Tibial artery (tissue), 4 donors: ENCODE measurements at regions of chr3 and their contacts with region 1.

Region 1: DNA sequence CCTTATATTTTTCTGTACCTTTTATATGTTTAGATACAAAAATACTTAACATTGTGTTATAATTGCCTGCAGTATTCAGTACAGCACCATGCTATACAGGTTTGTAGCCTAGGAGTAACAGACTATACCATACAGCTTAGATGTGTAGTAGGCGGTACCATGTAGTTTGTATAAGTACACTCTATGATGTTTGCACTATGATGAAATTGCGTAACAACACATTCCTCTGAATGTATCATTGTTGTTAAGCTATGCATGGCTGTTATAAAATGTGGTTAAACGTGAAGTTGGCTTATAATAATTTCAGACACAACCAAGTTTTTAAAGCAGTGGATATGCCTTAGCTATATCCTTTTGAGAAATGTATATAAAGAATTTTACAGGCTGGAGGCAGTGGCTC is 328.3 kb downstream of the PLCL2 start:
- DNase-seq: no peak
- H3K4me3 ChIP-seq: no peak overlapping the region
- H3K27ac ChIP-seq: no peak overlapping the region
- H3K4me1 ChIP-seq: peaks cover 0 to 12% (median 4%) of the 10 kb centered on the region in 4 donors
- H3K27me3 ChIP-seq: no peaks in the 10 kb centered on the region
- CTCF ChIP-seq: no peak

Region 2: DNA sequence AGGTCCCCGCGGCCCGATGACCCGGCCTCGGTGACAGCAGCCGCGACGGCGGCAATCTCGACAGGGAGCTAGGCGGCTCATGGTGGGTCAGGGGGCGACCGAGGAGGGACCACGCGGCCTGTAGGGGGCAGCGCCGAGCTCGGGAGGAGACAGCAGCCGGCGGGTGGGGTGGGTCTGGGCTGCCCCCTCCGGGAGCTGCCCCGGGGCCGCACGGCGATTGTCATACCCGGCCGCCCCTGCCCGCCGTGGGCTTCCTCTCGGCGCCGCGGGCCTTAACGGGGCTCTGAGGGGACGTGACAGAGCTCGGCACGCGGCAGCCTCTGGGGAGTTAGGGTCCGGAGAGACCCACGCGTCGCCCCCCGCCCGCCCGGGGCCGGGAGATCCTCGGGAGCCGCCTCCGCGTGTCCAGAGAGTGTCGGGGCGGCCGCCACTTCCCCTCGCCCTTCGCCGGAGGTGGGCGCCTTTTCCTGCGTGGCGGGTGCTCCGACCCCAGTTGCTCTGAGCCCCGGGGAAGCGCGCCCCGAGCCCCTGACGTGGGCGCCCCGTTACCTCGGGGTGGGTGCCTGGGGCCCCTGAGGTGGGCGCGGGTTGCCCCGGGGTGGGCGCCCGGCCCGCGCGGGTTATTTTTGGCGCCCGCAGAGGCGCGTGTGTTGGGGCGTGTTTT is 328.9 kb before region 1 on chr3:
- intact Hi-C with region 1: loop called (anchors 10 kb)
- DNase-seq: peak; percentile 40 to 79
- H3K4me3 ChIP-seq: peak overlapping the region; percentile 66
- H3K27ac ChIP-seq: peak overlapping the region; percentile 84 to 87
- H3K4me1 ChIP-seq: peaks cover 0 to 59% (median 17%) of the 10 kb centered on the region in 4 donors
- H3K27me3 ChIP-seq: no peaks in the 10 kb centered on the region
- CTCF ChIP-seq: peak; percentile 43 to 64

Region 3: GRCh38 chr3:17243621-17244020 is 30.5 kb after region 1 on chr3:
- intact Hi-C with region 1: no loop called
- DNase-seq: no peak
- H3K4me3 ChIP-seq: no peak overlapping the region
- H3K27ac ChIP-seq: no peak overlapping the region
- H3K4me1 ChIP-seq: no peaks in the 10 kb centered on the region
- H3K27me3 ChIP-seq: no peaks in the 10 kb centered on the region
- CTCF ChIP-seq: no peak